AG04449 (cell line): ENCODE measurements at regions of chr20 and their contacts with region 1.

Region 1: DNA sequence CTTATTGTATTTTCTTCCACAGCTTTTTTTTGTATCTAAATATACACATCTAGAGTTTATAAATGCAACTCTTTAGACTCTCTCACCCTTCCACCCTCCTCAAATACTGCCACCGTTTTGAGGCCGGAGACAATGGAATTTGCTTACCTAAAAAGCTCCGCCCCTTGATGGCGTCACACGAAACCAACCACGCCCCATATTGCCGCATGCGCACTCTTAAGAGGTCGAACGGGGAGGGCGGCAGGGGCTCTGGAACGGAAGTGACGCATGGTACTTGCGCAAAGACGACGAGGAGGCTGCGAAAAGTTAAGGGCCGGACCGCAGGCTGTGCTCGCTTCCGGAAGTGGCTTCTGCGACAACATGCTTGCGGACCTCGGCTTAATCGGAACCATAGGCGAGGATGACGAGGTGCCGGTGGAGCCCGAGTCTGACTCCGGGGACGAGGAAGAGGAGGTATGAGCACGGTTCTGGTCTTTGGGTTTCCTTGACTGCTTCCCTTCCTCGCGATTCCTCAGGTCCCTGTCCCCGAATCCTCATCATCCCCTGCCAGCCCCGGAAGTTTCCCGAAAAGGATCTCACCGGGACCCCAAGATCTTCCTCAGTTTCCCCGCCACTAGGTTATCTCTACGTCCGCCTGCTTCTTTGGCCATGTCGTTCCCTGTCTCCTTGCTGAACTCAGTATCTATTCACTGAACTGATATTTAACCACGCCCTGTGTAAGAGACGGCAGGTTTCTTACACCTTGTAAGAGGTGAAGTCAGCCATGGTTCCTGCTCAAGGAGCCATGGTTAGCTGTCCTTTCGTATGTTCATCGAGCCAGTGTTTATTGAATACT is at the start of gene DDX27:
- DNase-seq: peak; percentile 92
- H3K4me3 ChIP-seq: peak within 1 kb of the TSS; percentile 100
- CTCF ChIP-seq: no peak

Region 2: DNA sequence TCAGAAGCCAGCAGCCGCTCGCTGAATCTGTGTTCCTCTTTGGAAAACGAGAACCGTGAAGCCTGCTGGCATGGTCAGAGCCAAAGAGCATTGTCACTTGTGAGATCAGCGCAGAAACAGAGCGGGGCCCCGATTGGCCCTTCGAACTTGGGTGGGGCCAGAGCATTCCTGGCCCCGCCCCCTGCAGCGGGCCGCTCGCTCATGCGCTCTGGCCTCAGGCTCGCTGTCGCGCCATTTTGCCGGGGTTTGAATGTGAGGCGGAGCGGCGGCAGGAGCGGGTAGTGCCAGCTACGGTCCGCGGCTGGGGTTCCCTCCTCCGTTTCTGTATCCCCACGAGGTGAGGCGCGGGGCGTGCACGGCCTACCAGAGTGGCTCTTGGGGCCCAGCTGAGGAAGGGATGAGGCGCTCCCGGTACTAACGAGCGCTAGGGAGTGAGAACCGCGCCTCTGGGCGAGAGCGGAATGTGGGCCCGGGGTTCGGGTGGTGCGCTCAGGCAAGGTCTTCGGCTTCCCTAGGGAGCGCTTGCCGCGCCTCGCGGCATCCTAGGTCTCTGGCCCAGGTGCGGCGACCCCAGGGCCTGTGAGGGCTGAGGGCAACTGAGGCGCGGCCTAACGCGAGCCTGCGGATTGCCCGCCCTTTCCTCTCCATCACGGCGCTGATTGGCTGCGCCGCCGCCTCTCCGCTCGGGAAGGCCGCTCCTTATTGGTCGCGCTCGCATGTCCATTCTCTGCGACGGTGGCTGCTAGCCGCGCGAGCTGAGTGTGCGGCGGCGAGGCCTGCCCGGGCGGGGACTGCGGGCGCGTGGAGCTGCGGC is 173.0 kb before region 1 on chr20 and contains the start of gene CSE1L:
- CTCF ChIA-PET with region 1: interaction called, 10 read pairs
- POLR2A ChIA-PET with region 1: no interaction called
- DNase-seq: peak; percentile 69
- H3K4me3 ChIP-seq: peak within 1 kb of the TSS; percentile 100
- CTCF ChIP-seq: no peak

Region 3: GRCh38 chr20:49132995-49133478 is 86.3 kb before region 1 on chr20:
- CTCF ChIA-PET with region 1: interaction called, 258 read pairs
- POLR2A ChIA-PET with region 1: interaction called, 8 read pairs
- DNase-seq: peak; percentile 12
- H3K4me3 ChIP-seq: no peak overlapping the region
- CTCF ChIP-seq: peak; percentile 27

Region 4: GRCh38 chr20:49148601-49149000 is 70.7 kb before region 1 on chr20:
- CTCF ChIA-PET with region 1: interaction called, 21 read pairs
- POLR2A ChIA-PET with region 1: no interaction called
- DNase-seq: no peak
- H3K4me3 ChIP-seq: no peak overlapping the region
- CTCF ChIP-seq: no peak

Region 5: GRCh38 chr20:49171909-49172308 is 47.4 kb before region 1 on chr20:
- CTCF ChIA-PET with region 1: interaction called, 17 read pairs
- POLR2A ChIA-PET with region 1: interaction called, 4 read pairs
- DNase-seq: no peak
- H3K4me3 ChIP-seq: no peak overlapping the region
- CTCF ChIP-seq: no peak

Region 6: GRCh38 chr20:49186535-49187329 is 32.6 kb before region 1 on chr20:
- CTCF ChIA-PET with region 1: interaction called, 47 read pairs
- POLR2A ChIA-PET with region 1: interaction called, 5 read pairs
- DNase-seq: no peak
- H3K4me3 ChIP-seq: peak overlapping the region; percentile 70
- CTCF ChIP-seq: no peak

Region 7: GRCh38 chr20:49245921-49246740 is 26.8 kb after region 1 on chr20:
- CTCF ChIA-PET with region 1: interaction called, 23 read pairs
- POLR2A ChIA-PET with region 1: no interaction called
- DNase-seq: peak; percentile 17
- H3K4me3 ChIP-seq: no peak overlapping the region
- CTCF ChIP-seq: peak; percentile 59